IMR-90 (cell line): ENCODE measurements at regions of chr1 and their contacts with region 1.

Region 1: DNA sequence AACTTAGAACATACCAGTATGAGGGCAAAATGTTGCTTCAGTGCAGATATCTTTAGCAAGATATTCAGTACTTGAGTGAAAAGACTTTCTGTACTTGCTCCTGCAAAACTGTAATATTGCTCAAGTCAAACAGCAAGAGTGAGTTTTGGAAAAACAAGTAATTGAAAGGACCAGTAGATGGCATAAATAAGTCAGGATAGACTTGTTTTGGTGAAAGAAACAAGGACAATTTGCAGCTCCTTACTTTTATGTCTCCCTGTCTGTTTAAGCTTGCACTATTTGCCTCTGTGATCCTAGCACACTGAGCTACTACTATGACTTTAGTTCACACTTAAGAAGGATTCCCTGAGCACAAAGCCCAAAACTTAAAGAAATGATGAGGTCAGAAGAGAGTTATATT is 39.1 kb downstream of the IFI44 start:
- DNase-seq: peak; percentile 57
- ATAC-seq: peak; percentile 70
- H3K4me3 ChIP-seq: no peak overlapping the region
- H3K27ac ChIP-seq: no peak overlapping the region
- H3K4me1 ChIP-seq: no peaks in the 10 kb centered on the region
- H3K27me3 ChIP-seq: no peaks in the 10 kb centered on the region
- CTCF ChIP-seq: peak; percentile 49
- POLR2A ChIP-seq: no peak
- RAD21 ChIP-seq: peak; percentile 54

Region 2: GRCh38 chr1:78401148-78401547 is 287.6 kb before region 1 on chr1:
- CTCF ChIA-PET with region 1: no interaction called
- POLR2A ChIA-PET with region 1: no interaction called
- dilution Hi-C with region 1: no loop called
- in situ Hi-C with region 1: no loop called
- intact Hi-C with region 1: no loop called
- DNase-seq: peak; percentile 25
- ATAC-seq: peak; percentile 67
- H3K4me3 ChIP-seq: no peak overlapping the region
- H3K27ac ChIP-seq: no peak overlapping the region
- H3K4me1 ChIP-seq: no peaks in the 10 kb centered on the region
- H3K27me3 ChIP-seq: 0 out of 2 replicates have a peak, but pooled peaks cover 2% of the 10 kb centered on the region
- CTCF ChIP-seq: no peak
- POLR2A ChIP-seq: no peak
- RAD21 ChIP-seq: no peak

Region 3: GRCh38 chr1:78419309-78419708 is 269.4 kb before region 1 on chr1:
- CTCF ChIA-PET with region 1: no interaction called
- POLR2A ChIA-PET with region 1: no interaction called
- dilution Hi-C with region 1: no loop called
- in situ Hi-C with region 1: no loop called
- intact Hi-C with region 1: no loop called
- DNase-seq: peak; percentile 5
- ATAC-seq: no peak
- H3K4me3 ChIP-seq: no peak overlapping the region
- H3K27ac ChIP-seq: no peak overlapping the region
- H3K4me1 ChIP-seq: no peaks in the 10 kb centered on the region
- H3K27me3 ChIP-seq: peaks cover 6% of the 10 kb centered on the region
- CTCF ChIP-seq: no peak
- POLR2A ChIP-seq: no peak
- RAD21 ChIP-seq: no peak

Region 4: DNA sequence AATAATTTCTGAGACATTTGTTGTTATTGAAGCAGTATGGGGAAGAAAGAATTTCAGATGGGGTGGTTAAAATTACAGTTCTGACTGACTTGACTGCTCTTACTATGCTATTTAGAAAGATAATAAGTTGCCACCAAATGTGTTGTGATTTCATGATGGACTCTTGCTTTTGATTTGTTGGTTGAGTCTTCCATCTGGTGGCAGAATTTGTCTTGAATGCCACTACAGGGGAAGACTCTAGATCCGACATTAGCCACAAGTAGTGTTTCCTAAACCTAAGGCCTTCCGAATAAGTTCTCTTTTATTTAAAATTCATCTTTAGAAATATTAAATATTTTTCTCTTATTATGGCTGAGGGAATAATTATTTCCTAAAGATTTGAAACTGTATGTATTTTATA is 508.7 kb after region 1 on chr1:
- CTCF ChIA-PET with region 1: no interaction called
- POLR2A ChIA-PET with region 1: no interaction called
- dilution Hi-C with region 1: no loop called
- in situ Hi-C with region 1: no loop called
- intact Hi-C with region 1: loop called (anchors 5 kb)
- DNase-seq: peak; percentile 38
- ATAC-seq: no peak
- H3K4me3 ChIP-seq: no peak overlapping the region
- H3K27ac ChIP-seq: no peak overlapping the region
- H3K4me1 ChIP-seq: peaks cover 2% of the 10 kb centered on the region
- H3K27me3 ChIP-seq: no peaks in the 10 kb centered on the region
- CTCF ChIP-seq: peak; percentile 46
- POLR2A ChIP-seq: no peak
- RAD21 ChIP-seq: peak; percentile 51